Activated CD4-positive, alpha-beta T cell treated with anti-CD3 and anti-CD28 coated beads for 36 hours (primary cell): ENCODE measurements at regions of chr14 and their contacts with region 1.

Region 1: DNA sequence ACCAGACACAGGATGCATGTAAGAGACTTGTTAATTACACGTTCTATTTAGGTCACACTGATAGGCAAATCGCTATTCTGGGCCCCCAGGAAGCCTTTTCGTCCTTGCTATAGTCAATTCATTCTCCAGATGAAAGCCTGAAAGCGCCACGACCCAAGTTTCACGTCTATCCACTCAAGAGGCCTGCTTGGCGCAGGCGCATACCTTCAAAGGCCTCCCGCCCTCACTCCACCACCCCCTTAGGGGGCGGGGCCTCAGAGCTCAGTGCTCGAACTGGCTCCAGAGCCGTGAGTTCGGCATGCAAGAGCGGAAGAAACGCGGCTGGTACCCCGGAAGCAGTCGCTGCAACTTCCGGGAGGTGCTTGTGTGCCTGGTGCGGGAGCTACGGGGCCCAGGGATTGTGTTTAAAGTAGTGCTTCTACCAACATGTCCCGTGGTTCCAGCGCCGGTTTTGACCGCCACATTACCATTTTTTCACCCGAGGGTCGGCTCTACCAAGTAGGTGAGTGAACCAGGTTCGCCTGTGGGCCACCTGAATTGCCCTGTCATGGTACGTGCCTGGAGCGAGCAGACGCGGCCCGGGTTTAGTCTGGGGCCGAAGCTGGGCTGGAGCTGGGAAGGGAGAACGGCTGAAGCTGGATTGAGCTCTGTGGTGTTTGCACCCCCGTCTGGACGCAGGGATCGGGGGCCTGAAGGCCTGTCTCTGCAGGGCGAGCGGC is at the start of gene PSMA6:
- DNase-seq: peak; percentile 100
- ATAC-seq: peak; percentile 86
- H3K4me3 Mint-ChIP-seq: peak within 1 kb of the TSS; percentile 85
- H3K27ac Mint-ChIP-seq: peak within 1 kb of the TSS; percentile 96
- H3K4me1 Mint-ChIP-seq: peaks cover 52% of the 10 kb centered on the region
- H3K27me3 Mint-ChIP-seq: no peaks in the 10 kb centered on the region
- total RNA-seq, gene PSMA6: 374 to 425 TPM

Region 2: GRCh38 chr14:34875031-34875922 is 416.9 kb before region 1 on chr14 and contains the start of gene BAZ1A:
- CTCF ChIA-PET with region 1: no interaction called
- POLR2A ChIA-PET with region 1: interaction called, 6 read pairs
- intact Hi-C with region 1: loop called in 1 of 2 experiments (anchors 2 kb)
- DNase-seq: peak; percentile 50
- ATAC-seq: peak; percentile 9
- H3K4me3 Mint-ChIP-seq: peak within 1 kb of the TSS; percentile 99
- H3K27ac Mint-ChIP-seq: peak within 1 kb of the TSS; percentile 98
- H3K4me1 Mint-ChIP-seq: peaks cover 29% of the 10 kb centered on the region
- H3K27me3 Mint-ChIP-seq: no peaks in the 10 kb centered on the region
- total RNA-seq, gene BAZ1A: 53.9 to 75.2 TPM

Region 3: GRCh38 chr14:35261774-35262173 is 30.4 kb before region 1 on chr14:
- CTCF ChIA-PET with region 1: no interaction called
- POLR2A ChIA-PET with region 1: interaction called, 11 read pairs
- intact Hi-C with region 1: no loop called
- DNase-seq: no peak
- ATAC-seq: peak; percentile 36
- H3K4me3 Mint-ChIP-seq: no peak overlapping the region
- H3K27ac Mint-ChIP-seq: no peak overlapping the region
- H3K4me1 Mint-ChIP-seq: peaks cover 5% of the 10 kb centered on the region
- H3K27me3 Mint-ChIP-seq: no peaks in the 10 kb centered on the region

Region 4: GRCh38 chr14:35331605-35332516 is 39.7 kb after region 1 on chr14:
- CTCF ChIA-PET with region 1: no interaction called
- POLR2A ChIA-PET with region 1: interaction called, 11 read pairs
- intact Hi-C with region 1: loop called (anchors 1 to 2 kb)
- DNase-seq: no peak
- ATAC-seq: no peak
- H3K4me3 Mint-ChIP-seq: no peak overlapping the region
- H3K27ac Mint-ChIP-seq: peak overlapping the region; percentile 96
- H3K4me1 Mint-ChIP-seq: peaks cover 32% of the 10 kb centered on the region
- H3K27me3 Mint-ChIP-seq: no peaks in the 10 kb centered on the region

Region 5: DNA sequence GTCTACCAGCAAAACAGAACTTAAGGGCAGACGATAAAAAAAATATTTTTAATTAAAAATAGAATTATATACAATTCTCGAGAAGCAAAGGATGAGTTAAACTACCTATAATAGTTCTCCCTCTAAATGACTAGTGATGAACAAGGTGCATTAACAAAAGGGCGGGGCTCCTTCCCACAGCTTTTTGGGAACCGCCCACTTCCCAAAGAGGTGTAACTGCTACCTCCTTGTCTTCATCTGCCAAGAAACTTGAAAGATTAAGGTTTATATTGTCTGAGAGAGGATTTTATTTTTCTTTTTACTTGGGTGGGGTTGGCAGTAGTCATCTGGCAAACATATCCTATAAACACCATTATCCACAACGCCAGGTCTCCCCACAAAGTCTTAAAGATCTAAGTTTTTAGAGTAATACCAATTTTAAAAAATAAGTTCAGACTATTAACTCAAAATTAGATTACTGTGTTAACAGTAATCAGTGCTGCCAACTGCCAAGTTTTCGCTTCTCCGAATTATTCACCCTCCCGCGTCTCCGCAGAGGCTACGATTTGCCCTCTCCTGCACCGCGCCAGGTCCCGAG is 516.0 kb after region 1 on chr14:
- CTCF ChIA-PET with region 1: interaction called, 3 read pairs
- POLR2A ChIA-PET with region 1: no interaction called
- intact Hi-C with region 1: loop called in 1 of 2 experiments (anchors 2 kb)
- DNase-seq: peak; percentile 54
- ATAC-seq: no peak
- H3K4me3 Mint-ChIP-seq: peak overlapping the region; percentile 95
- H3K27ac Mint-ChIP-seq: peak overlapping the region; percentile 97
- H3K4me1 Mint-ChIP-seq: peaks cover 24% of the 10 kb centered on the region
- H3K27me3 Mint-ChIP-seq: no peaks in the 10 kb centered on the region